ENCODE measurements at regions of chr18 and their contacts with region 1.

Region 1: DNA sequence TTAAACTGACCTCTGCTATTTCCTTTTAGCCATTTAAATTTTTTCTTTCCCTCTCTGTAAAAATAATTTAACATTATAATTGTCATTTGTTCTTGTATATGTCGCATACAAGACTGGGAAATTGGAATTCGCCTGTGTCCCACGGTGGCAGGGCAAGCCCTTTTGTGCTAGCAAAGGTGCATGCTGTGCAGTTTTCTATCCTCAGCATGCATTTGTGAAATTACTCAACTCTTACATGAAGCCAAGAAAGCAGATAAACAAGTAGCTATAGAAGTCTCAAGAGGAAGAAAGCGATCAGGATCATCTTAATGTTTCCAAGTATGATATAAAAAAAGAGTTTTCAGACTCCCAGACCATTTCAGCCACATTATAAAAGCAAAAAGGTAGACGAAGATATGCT is 392.6 kb upstream of the CHST9 start:
- DNase-seq: no peak
- H3K4me3 ChIP-seq: no peak overlapping the region
- H3K27ac ChIP-seq: no peak overlapping the region
- H3K4me1 ChIP-seq: no peaks in the 10 kb centered on the region
- H3K27me3 ChIP-seq: no peaks in the 10 kb centered on the region
- CTCF ChIP-seq: no peak
- POLR2A ChIP-seq: no peak

Region 2: DNA sequence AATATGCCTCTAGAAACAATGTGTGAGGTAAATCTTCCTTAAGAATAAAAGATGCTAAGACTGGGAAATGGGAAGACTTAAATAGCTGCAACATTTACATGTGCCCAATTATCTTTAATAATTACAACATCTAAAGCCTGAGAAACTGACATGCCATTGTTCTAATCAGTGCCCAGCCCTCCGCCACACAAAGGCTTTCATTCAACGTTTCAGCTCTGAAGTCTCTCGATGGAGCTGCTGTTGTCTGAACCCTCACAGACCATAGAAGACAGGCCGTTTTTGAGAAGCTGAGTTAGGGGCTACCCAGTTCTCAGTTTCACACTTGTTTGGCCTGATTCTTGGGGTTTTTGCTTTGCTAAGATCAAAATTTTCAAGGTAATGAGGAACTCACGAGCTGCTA is 77.2 kb before region 1 on chr18:
- intact Hi-C with region 1: loop called (anchors 10 kb)
- DNase-seq: no peak
- H3K4me3 ChIP-seq: no peak overlapping the region
- H3K27ac ChIP-seq: no peak overlapping the region
- H3K4me1 ChIP-seq: no peaks in the 10 kb centered on the region
- H3K27me3 ChIP-seq: no peaks in the 10 kb centered on the region
- CTCF ChIP-seq: no peak
- POLR2A ChIP-seq: no peak

Region 3: DNA sequence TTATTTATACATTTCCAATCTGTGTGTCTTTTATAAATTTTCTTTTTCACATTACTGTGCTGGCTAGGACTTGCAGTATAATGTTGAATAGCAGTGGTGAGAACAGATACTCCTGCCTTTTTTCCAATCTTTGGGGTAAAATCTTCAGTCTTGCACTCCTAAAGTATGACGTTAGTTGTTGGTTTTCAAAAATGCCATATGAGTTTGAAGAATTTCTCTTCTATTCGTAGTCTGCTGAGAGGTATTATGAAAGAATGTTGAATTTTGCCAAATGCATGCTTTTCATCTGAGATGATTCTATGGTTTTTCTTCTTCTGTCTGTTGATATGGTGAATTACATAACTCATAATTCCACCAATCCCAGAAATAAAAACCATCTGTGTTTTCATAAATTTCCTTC is 57.4 kb before region 1 on chr18:
- intact Hi-C with region 1: no loop called
- DNase-seq: no peak
- H3K4me3 ChIP-seq: no peak overlapping the region
- H3K27ac ChIP-seq: no peak overlapping the region
- H3K4me1 ChIP-seq: no peaks in the 10 kb centered on the region
- H3K27me3 ChIP-seq: no peaks in the 10 kb centered on the region
- CTCF ChIP-seq: no peak
- POLR2A ChIP-seq: no peak

Region 4: DNA sequence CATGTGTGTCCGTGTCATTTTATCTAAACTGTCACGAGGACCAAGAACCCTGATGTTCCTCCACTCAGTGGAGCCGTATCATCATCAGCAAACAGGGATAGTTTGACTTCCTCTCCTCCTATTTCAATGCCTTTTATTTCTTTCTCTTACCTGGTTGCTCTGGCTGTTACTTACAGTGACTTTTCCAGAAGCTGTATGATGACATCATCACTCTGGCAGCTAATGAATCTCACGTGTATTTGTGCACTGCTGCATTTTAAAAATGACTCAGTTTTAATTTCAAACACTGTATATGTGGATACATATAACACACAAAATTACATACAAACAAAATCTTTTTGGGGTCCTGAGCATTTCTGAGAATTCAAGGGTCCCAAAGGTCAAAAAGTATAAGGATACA is 117.8 kb after region 1 on chr18:
- intact Hi-C with region 1: no loop called
- DNase-seq: no peak
- H3K4me3 ChIP-seq: no peak overlapping the region
- H3K27ac ChIP-seq: no peak overlapping the region
- H3K4me1 ChIP-seq: no peaks in the 10 kb centered on the region
- H3K27me3 ChIP-seq: no peaks in the 10 kb centered on the region
- CTCF ChIP-seq: no peak
- POLR2A ChIP-seq: no peak

Region 5: GRCh38 chr18:28189400-28190239 is 611.9 kb after region 1 on chr18:
- intact Hi-C with region 1: no loop called
- DNase-seq: peak; percentile 29
- H3K4me3 ChIP-seq: no peak overlapping the region
- H3K27ac ChIP-seq: no peak overlapping the region
- H3K4me1 ChIP-seq: no peaks in the 10 kb centered on the region
- H3K27me3 ChIP-seq: no peaks in the 10 kb centered on the region
- CTCF ChIP-seq: peak in 3 of 4 experiments; percentile 45 to 56 (median 55)
- POLR2A ChIP-seq: no peak